MCF 10A (cell line): ENCODE measurements at regions of chr4 and their contacts with region 1.

Region 1: GRCh38 chr4:17544205-17544604 is 29.2 kb downstream of the CLRN2 start:
- DNase-seq: no peak
- H3K4me3 Mint-ChIP-seq: no peak overlapping the region
- H3K27ac Mint-ChIP-seq: no peak overlapping the region
- H3K4me1 Mint-ChIP-seq: no peaks in the 10 kb centered on the region
- H3K27me3 Mint-ChIP-seq: peaks cover 11% of the 10 kb centered on the region
- CTCF ChIP-seq: no peak

Region 2: DNA sequence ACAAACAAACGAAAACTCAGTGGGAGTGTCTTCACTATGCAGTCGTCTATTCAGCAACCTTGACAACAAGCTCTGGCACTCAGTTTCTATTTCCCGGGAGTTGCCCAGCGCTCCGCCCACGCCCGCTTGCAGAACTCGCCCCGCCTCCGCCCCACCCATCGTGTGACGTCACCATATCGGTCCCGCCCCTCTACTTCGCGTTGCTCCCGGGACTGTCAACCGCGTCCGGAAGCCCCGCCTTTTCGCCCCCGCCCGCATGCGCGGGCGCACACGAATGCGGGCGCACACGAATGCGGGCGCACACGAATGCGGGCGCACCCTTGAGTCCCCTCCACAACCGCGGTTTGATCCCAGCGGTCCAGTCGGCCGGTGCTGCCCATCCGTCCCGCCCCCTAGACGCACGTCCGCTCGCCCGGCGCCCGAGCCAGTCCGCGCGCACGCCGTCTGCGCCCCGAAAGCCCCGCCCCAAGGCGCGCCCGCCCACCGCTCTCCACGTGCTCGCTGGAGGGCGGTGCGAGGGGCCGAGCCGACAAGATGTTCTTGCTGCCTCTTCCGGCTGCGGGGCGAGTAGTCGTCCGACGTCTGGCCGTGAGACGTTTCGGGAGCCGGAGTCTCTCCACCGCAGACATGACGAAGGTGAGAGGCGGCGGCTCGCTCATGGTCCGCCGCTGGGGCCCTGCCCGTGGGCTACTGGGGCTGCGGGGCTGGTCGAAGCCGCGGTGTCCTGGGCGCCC is 32.9 kb after region 1 on chr4 and contains the start of gene LAP3:
- CTCF ChIA-PET with region 1: interaction called, 8 read pairs
- POLR2A ChIA-PET with region 1: interaction called, 15 read pairs
- intact Hi-C with region 1: loop called (anchors 1 kb)
- DNase-seq: peak; percentile 94
- H3K4me3 Mint-ChIP-seq: peak within 1 kb of the TSS; percentile 91
- H3K27ac Mint-ChIP-seq: peak within 1 kb of the TSS; percentile 94
- H3K4me1 Mint-ChIP-seq: peaks cover 12% of the 10 kb centered on the region
- H3K27me3 Mint-ChIP-seq: no peaks in the 10 kb centered on the region
- CTCF ChIP-seq: no peak
- total RNA-seq, gene LAP3: 31.0 and 45.0 TPM in 2 replicates

Region 3: DNA sequence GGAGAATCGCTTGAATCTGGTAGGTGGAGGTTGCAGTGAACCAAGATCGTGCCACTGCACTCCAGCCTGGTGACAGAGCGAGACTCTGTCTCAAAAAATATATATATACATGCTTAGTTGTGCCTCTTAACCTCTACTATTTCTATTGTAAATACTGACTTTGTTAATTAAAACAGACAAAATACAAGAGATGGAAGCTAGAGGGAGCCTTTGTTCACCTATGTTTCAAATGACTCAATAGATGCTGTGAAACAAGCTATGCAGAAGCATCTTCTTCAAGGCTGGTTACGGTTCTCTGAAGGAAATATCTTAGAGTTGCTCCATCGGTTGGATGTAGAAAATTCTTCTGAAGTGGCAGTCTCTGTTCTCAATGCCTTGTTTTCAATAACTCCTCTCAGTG is 272.8 kb after region 1 on chr4:
- CTCF ChIA-PET with region 1: interaction called, 10 read pairs
- POLR2A ChIA-PET with region 1: no interaction called
- intact Hi-C with region 1: no loop called
- DNase-seq: peak; percentile 56
- H3K4me3 Mint-ChIP-seq: peak overlapping the region; percentile 24
- H3K27ac Mint-ChIP-seq: no peak overlapping the region
- H3K4me1 Mint-ChIP-seq: peaks cover 13% of the 10 kb centered on the region
- H3K27me3 Mint-ChIP-seq: no peaks in the 10 kb centered on the region
- CTCF ChIP-seq: peak; percentile 52

Region 4: GRCh38 chr4:17875402-17876070 is 331.3 kb after region 1 on chr4:
- CTCF ChIA-PET with region 1: no interaction called
- POLR2A ChIA-PET with region 1: no interaction called
- intact Hi-C with region 1: no loop called
- DNase-seq: no peak
- H3K4me3 Mint-ChIP-seq: no peak overlapping the region
- H3K27ac Mint-ChIP-seq: no peak overlapping the region
- H3K4me1 Mint-ChIP-seq: no peaks in the 10 kb centered on the region
- H3K27me3 Mint-ChIP-seq: no peaks in the 10 kb centered on the region
- CTCF ChIP-seq: no peak

Region 5: GRCh38 chr4:18568600-18568999 is 1024.4 kb after region 1 on chr4:
- CTCF ChIA-PET with region 1: no interaction called
- POLR2A ChIA-PET with region 1: no interaction called
- intact Hi-C with region 1: loop called (anchors 1 kb)
- DNase-seq: no peak
- H3K4me3 Mint-ChIP-seq: no peak overlapping the region
- H3K27ac Mint-ChIP-seq: no peak overlapping the region
- H3K4me1 Mint-ChIP-seq: peaks cover 7% of the 10 kb centered on the region
- H3K27me3 Mint-ChIP-seq: no peaks in the 10 kb centered on the region
- CTCF ChIP-seq: peak; percentile 23